ENCODE measurements at regions of chr11 and their contacts with region 1.

Region 1: DNA sequence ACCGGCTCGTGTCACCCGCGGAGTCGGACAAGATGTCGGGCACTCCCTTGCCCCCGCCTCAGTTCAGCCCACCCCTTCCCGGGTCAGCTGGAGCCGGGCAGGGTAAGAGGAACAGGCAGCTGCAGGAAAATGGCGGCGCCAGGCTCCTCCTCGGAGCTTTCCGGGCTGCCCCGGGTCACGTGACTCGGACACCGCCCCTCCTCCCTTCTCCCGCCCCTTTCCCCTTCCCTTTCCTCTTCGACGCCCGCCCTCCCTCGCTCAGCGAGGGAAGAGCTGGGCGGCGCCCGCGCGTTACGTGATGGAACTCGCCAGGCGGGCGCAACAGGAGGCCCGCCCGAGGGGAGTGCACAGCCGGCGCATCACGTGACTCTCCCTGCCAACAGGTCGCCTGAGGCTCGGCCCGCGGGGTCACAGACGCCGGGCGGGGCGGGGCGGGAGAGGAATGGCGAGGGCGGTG is at the start of gene PICALM:
- DNase-seq: peak; percentile 93 to 98 (median 97)
- H3K4me3 ChIP-seq: peak within 1 kb of the TSS; percentile 61 to 100 (median 93)
- H3K27ac ChIP-seq: peak within 1 kb of the TSS; percentile 91 to 99 (median 98)
- H3K27me3 ChIP-seq: no peaks in the 10 kb centered on the region
- CTCF ChIP-seq: peak in 35 of 56 donors; percentile 12 to 64 (median 34)
- total RNA-seq, gene PICALM: 218 to 547 (median 291) TPM

Region 2: GRCh38 chr11:85947431-85948272 is 121.3 kb before region 1 on chr11:
- intact Hi-C with region 1: loop called (anchors 2 to 10 kb)
- DNase-seq: no peak
- H3K4me3 ChIP-seq: peak overlapping the region in 20 of 59 donors; percentile 2 to 38 (median 22)
- H3K27ac ChIP-seq: peak overlapping the region; percentile 11 to 96 (median 84)
- H3K27me3 ChIP-seq: no peaks in the 10 kb centered on the region
- CTCF ChIP-seq: peak in 11 of 56 donors; percentile 5 to 39 (median 14)

Region 3: GRCh38 chr11:86099874-86100273 is 30.9 kb after region 1 on chr11:
- intact Hi-C with region 1: loop called in 1 of 2 experiments (anchors 5 kb)
- DNase-seq: no peak
- H3K4me3 ChIP-seq: no peak overlapping the region
- H3K27ac ChIP-seq: no peak overlapping the region
- H3K27me3 ChIP-seq: no peaks in the 10 kb centered on the region
- CTCF ChIP-seq: no peak

Region 4: DNA sequence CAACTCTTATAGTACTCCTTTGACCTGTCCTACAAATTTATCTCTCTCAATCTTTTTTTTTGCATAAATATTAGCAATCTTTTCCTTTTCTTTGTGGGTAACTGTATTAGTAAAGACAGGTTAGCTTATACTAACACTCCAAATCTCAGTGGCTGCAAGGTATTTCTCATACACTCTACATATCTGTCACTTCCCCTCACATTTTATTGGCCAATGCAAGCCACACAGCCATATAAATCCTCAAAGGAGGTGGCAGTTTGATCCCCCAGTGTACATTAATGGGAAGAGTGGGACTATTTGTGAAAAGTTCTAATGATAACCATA is 133.0 kb after region 1 on chr11:
- intact Hi-C with region 1: loop called in 1 of 2 experiments (anchors 10 kb)
- DNase-seq: no peak
- H3K4me3 ChIP-seq: peak overlapping the region in 57 of 59 donors; percentile 4 to 66 (median 47)
- H3K27ac ChIP-seq: peak overlapping the region in 53 of 59 donors; percentile 3 to 85 (median 58)
- H3K27me3 ChIP-seq: no peaks in the 10 kb centered on the region
- CTCF ChIP-seq: no peak

Region 5: DNA sequence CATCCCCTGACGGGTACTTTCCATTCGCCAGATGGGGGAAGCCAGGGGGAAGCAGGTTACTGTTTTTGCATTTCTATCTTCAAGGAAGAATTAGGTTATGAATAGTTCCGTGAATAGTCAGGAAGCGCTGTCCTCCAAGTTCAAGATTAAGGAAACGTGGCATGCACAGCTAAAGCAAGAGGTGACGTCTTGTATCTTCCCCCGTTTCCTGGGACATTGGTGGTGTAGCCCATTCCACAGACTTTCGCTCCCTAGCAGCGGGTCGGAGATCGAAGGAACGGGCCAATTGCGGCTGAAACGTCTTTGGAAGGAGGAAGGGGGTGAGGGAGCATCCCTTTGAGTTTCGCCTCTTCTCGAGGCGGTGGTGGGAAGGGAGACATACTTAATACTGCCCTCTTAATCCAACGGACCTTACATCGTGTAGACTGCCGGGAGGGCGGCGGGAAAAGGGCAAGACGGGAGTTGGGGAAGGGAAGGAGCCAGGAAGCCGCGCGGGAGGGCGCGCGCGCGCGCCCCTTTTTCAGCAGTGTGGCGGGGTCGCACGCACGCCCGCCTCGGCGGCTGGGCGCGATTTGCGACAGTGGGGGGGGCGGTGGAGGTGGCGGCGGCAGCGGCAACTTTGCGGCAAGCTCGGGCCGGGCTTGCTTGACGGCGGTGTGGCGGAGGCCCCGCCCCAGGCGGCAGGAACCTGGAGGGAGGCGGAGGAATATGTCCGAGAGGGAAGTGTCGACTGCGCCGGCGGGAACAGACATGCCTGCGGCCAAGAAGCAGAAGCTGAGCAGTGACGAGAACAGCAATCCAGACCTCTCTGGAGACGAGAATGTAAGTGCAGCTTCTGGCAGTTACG is 175.8 kb after region 1 on chr11 and contains the start of gene EED:
- intact Hi-C with region 1: no loop called
- DNase-seq: peak; percentile 83 to 96 (median 92)
- H3K4me3 ChIP-seq: peak within 1 kb of the TSS; percentile 63 to 98 (median 82)
- H3K27ac ChIP-seq: peak within 1 kb of the TSS; percentile 90 to 100 (median 99)
- H3K27me3 ChIP-seq: peaks cover 0 to 5% (median 0%) of the 10 kb centered on the region in 45 donors
- CTCF ChIP-seq: peak in 26 of 56 donors; percentile 3 to 38 (median 14)
- total RNA-seq, gene EED: 19.7 to 40.3 (median 29.2) TPM

Region 6: GRCh38 chr11:86477495-86478155 is 408.6 kb after region 1 on chr11:
- intact Hi-C with region 1: no loop called
- DNase-seq: no peak
- H3K4me3 ChIP-seq: no peak overlapping the region
- H3K27ac ChIP-seq: peak overlapping the region in 3 of 59 donors; percentile 10 to 30 (median 22)
- H3K27me3 ChIP-seq: no peaks in the 10 kb centered on the region
- CTCF ChIP-seq: no peak

Measured in dorsolateral prefrontal cortex (tissue), 120 donors.